Esophagus muscularis mucosa (tissue), 4 donors: ENCODE measurements at regions of chr2 and their contacts with region 1.

Region 1: GRCh38 chr2:37973615-37974353 is 48.7 kb downstream of the RMDN2 start:
- DNase-seq: no peak
- H3K4me3 ChIP-seq: no peak overlapping the region
- H3K27ac ChIP-seq: no peak overlapping the region
- H3K4me1 ChIP-seq: no peaks in the 10 kb centered on the region
- H3K27me3 ChIP-seq: no peaks in the 10 kb centered on the region
- CTCF ChIP-seq: no peak
- EP300 ChIP-seq: no peak
- POLR2A ChIP-seq: no peak

Region 2: GRCh38 chr2:37890893-37891495 is 82.8 kb before region 1 on chr2:
- intact Hi-C with region 1: loop called (anchors 10 kb)
- DNase-seq: no peak
- H3K4me3 ChIP-seq: no peak overlapping the region
- H3K27ac ChIP-seq: no peak overlapping the region
- H3K4me1 ChIP-seq: peaks cover 0 to 14% (median 9%) of the 10 kb centered on the region in 4 donors
- H3K27me3 ChIP-seq: no peaks in the 10 kb centered on the region
- CTCF ChIP-seq: peak; percentile 69 to 87 (median 75)
- EP300 ChIP-seq: no peak
- POLR2A ChIP-seq: no peak

Region 3: DNA sequence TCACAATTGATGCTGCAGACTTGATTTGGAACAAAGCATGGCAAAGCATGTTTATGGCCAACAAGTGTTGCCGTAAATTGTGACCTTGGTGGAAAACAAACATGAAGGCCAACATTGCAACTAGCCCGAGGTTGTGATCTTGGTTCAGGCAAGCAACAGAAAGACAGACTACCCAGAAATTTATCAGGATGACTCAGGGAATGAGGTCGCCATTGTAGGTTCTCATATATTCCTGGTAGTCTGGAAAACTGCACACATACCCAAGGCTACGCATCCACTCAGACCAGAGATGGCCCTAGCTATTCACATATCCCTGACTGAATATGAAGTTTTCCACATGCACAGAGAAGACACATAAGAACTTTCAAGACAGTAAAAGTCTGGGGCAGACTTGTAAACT is 72.0 kb after region 1 on chr2:
- intact Hi-C with region 1: no loop called
- DNase-seq: no peak
- H3K4me3 ChIP-seq: no peak overlapping the region
- H3K27ac ChIP-seq: no peak overlapping the region
- H3K4me1 ChIP-seq: no peaks in the 10 kb centered on the region
- H3K27me3 ChIP-seq: no peaks in the 10 kb centered on the region
- CTCF ChIP-seq: no peak
- EP300 ChIP-seq: no peak
- POLR2A ChIP-seq: no peak